AG04450 (cell line): ENCODE measurements at regions of chr1 and their contacts with region 1.

Region 1: GRCh38 chr1:18913065-18913835 is 10.9 kb upstream of the ALDH4A1 start:
- DNase-seq: peak; percentile 43
- H3K4me3 ChIP-seq: no peak overlapping the region
- H3K27ac ChIP-seq: peak overlapping the region; percentile 33
- H3K27me3 ChIP-seq: no peaks in the 10 kb centered on the region
- CTCF ChIP-seq: peak; percentile 100

Region 2: DNA sequence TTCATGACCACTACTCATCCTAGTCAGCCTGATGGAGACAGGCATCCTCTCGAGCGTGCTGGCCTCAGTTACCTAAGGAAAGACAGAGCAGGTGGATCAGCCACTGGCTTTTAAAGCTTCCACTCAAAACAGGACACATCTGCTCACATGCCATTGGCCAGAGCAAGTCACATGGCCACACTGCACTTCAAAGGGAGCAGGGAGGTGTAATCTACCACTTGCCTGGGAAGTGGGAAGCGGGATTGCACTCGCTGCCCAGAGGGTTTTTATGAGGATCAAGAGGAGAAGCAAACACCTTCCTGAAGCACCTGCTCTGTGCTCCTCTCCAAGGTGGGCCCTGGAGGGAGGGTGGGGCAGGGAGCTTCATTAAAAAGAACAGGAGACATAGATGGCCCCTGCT is 161.8 kb before region 1 on chr1:
- CTCF ChIA-PET with region 1: no interaction called
- POLR2A ChIA-PET with region 1: no interaction called
- DNase-seq: no peak
- H3K4me3 ChIP-seq: no peak overlapping the region
- H3K27ac ChIP-seq: no peak overlapping the region
- H3K27me3 ChIP-seq: no peaks in the 10 kb centered on the region
- CTCF ChIP-seq: no peak

Region 3: GRCh38 chr1:18926315-18927081 is 13.2 kb after region 1 on chr1:
- CTCF ChIA-PET with region 1: interaction called, 60 read pairs
- POLR2A ChIA-PET with region 1: interaction called, 3 read pairs
- DNase-seq: peak; percentile 71
- H3K4me3 ChIP-seq: peak overlapping the region; percentile 32
- H3K27ac ChIP-seq: peak overlapping the region; percentile 96
- H3K27me3 ChIP-seq: no peaks in the 10 kb centered on the region
- CTCF ChIP-seq: no peak

Region 4: GRCh38 chr1:18949686-18950400 is 36.6 kb after region 1 on chr1:
- CTCF ChIA-PET with region 1: interaction called, 32 read pairs
- POLR2A ChIA-PET with region 1: no interaction called
- DNase-seq: no peak
- H3K4me3 ChIP-seq: peak overlapping the region; percentile 47
- H3K27ac ChIP-seq: peak overlapping the region; percentile 97
- H3K27me3 ChIP-seq: no peaks in the 10 kb centered on the region
- CTCF ChIP-seq: peak; percentile 19; the same call in 1 of the 2 replicates

Region 5: DNA sequence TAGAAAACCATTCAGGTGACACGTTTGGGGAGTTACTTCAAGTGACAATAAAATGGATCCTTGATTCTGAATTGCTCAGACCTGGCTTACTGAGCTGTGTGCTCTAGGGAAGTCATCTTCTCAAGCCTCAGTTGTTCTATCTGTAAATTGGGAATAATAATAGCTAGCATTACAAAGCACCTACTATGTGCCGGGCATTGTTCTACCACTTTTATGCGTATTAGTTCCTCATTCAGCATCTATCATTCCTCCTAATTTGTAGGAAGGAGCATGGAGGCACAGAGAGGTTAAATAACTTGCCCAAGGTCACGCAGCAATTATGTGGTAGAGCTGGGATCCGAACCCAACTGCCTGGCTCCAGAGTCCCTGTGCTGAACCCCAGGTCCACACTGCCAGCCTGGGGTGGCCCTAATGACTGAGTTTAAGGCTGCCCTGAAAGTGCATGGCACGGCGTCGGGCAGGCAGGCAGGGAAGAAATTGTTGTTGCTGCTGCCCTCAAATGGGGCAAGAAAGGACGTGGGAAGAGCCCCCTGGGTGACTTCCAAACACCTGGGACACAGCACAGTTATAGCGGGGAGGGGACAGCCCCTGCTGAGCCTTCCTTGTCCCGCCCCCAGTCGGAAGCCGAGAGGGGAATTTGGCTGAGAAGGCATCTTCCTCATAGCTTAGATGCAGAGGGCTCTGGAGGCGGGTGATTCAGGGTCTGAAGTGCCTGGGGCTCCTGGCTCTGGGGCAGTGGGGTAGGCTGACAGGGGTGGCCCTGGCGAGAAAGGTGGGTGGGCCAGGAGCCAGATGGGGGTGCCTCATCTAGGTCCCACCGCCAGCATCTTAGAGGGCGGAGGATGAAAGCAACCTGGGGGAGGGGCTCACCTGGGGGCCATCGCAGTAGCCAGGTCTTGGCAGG is 129.7 kb after region 1 on chr1:
- CTCF ChIA-PET with region 1: interaction called, 11 read pairs
- POLR2A ChIA-PET with region 1: no interaction called
- DNase-seq: no peak
- H3K4me3 ChIP-seq: no peak overlapping the region
- H3K27ac ChIP-seq: no peak overlapping the region
- H3K27me3 ChIP-seq: peaks cover 38% of the 10 kb centered on the region
- CTCF ChIP-seq: no peak

Region 6: DNA sequence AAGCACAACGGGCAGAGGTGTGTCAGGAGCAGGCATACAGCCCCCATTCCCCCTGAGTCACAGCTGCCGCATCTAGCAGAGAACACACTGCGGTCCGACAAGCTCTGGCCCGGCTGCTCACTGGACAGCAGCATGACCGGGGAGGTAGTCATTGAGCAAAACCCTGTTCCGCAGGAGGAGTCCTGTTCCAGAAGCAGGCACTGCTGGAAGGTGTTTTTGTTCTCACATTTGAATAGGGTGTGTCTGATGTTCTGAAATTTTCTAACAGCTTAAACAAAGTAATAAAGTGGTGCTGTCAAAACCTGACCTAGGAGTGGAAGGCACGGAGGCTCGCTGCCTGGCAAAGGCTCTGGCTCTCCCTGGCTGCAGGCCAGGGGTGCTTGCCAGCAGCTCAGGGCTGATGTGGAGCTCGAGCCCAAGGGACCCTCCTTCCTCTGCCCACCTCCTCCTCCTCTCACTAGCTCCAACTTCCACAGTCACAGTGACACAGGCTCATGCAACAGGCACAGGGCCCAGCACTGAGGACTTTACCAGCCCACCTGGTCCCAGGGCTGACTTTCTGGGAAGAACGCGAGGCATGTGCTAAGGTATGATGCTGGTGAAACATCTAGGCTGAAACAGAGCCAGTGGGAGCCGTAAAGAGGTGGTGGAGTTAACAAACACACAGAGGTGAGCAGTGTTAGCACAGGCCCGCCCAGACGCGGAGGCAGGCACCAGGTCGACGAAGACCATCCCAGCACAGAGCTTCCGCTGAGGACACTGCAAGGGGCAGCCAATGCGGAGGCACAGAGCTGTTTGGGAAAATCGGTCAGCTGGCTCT is 161.9 kb after region 1 on chr1:
- CTCF ChIA-PET with region 1: interaction called, 28 read pairs
- POLR2A ChIA-PET with region 1: no interaction called
- DNase-seq: no peak
- H3K4me3 ChIP-seq: no peak overlapping the region
- H3K27ac ChIP-seq: no peak overlapping the region
- H3K27me3 ChIP-seq: no peaks in the 10 kb centered on the region
- CTCF ChIP-seq: no peak

Region 7: DNA sequence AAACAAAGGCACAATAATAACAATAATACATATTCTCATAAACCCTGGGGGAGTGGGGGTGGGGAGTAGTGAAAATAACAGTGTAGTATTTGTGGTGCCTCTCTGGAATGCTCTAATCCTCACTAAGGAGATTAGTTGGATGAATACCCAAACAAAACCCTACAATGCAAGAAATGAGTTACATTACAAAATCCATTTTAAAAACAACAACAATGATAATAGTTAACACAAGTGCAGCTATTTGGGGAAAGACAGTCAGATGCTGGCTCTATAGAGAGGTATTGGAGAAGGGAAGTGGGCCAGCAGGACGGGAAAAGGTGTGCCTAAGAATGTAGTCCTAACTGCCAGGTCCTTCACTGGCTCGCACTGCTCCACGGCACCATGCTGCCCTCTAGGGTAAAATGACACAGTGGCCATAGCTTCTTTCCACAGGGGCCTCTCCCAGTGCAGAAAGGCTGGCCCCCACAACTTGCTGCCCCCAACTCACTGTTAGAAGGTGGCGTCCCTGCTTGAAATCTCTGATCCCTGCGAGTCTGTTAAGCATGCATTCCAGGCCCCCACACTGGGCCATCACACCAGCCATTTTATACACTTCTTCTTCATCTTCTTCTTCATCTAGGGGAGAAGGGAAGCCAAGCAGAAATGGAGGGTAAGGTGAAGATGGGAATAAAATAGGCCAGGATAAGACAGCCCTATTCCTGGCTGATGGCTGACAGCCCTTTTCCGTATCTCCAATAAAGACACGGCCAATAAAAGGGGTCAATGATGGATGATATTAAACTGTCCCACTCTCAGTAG is 183.0 kb after region 1 on chr1:
- CTCF ChIA-PET with region 1: interaction called, 82 read pairs
- POLR2A ChIA-PET with region 1: interaction called, 3 read pairs
- DNase-seq: no peak
- H3K4me3 ChIP-seq: no peak overlapping the region
- H3K27ac ChIP-seq: no peak overlapping the region
- H3K27me3 ChIP-seq: no peaks in the 10 kb centered on the region
- CTCF ChIP-seq: peak; percentile 35; the same call in 1 of the 2 replicates